HepG2 (cell line): ENCODE measurements at regions of chr1 and their contacts with region 1.

Region 1: DNA sequence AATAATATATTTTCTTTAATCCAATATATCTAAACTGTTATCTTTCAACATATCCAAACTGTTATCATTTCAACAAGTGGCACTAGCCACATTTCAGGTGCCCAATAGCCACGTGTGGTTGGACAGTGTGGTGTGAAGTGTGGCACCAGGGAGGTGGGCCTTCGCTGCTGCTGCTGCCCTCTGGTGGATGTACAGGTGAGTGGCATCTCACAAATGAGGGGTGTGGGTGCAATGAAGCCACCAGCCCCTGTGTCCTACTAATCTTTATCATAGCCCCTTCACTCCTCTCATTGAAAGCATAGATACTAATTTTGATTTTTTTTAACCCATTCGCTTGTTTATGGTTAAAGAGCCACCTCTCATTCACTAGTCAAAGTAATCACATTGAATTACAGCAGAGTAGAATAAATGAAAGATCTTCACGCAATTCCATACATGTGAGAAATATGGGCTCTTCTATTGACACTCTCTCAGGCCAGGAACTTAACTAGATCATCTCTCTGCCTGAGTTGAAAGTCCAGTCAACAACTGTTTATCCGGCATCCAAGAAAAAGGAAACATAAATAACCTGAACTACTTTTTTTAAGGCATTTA is 499.2 kb downstream of the OMA1 start:
- DNase-seq: peak; percentile 6
- ATAC-seq: peak; percentile 83
- H3K4me3 ChIP-seq: no peak overlapping the region
- H3K27ac ChIP-seq: no peak overlapping the region
- H3K4me1 ChIP-seq: no peaks in the 10 kb centered on the region
- H3K27me3 ChIP-seq: no peaks in the 10 kb centered on the region
- CTCF ChIP-seq: peak; percentile 71
- EP300 ChIP-seq: no peak
- POLR2A ChIP-seq: no peak
- RAD21 ChIP-seq: peak; percentile 34; the same call in 1 of the 2 replicates

Region 2: GRCh38 chr1:58013237-58013636 is 34.1 kb before region 1 on chr1:
- CTCF ChIA-PET with region 1: no interaction called
- POLR2A ChIA-PET with region 1: no interaction called
- in situ Hi-C with region 1: no loop called
- intact Hi-C with region 1: loop called (anchors 1 kb)
- DNase-seq: peak; percentile 6
- ATAC-seq: no peak; the same call in 2 of the 3 replicates
- H3K4me3 ChIP-seq: no peak overlapping the region
- H3K27ac ChIP-seq: no peak overlapping the region
- H3K4me1 ChIP-seq: no peaks in the 10 kb centered on the region
- H3K27me3 ChIP-seq: no peaks in the 10 kb centered on the region
- CTCF ChIP-seq: peak; percentile 38
- EP300 ChIP-seq: no peak
- POLR2A ChIP-seq: no peak
- RAD21 ChIP-seq: no peak